CD14-positive monocyte (primary cell): ENCODE measurements at regions of chr1 and their contacts with region 1.

Region 1: GRCh38 chr1:183622884-183623785 is 12.4 kb downstream of the ARPC5 start:
- DNase-seq: peak; percentile 57 to 70 (median 57)
- H3K4me3 ChIP-seq: no peak overlapping the region
- H3K4me3 Mint-ChIP-seq: no peak overlapping the region
- H3K27ac ChIP-seq: peak overlapping the region in 1 of 2 donors; percentile 54
- H3K27ac Mint-ChIP-seq: peak overlapping the region; percentile 41 to 87 (median 66)
- H3K4me1 ChIP-seq: peaks cover 27 to 46% of the 10 kb centered on the region in 2 donors
- H3K4me1 Mint-ChIP-seq: peaks cover 39% of the 10 kb centered on the region
- H3K27me3 ChIP-seq: no peaks in the 10 kb centered on the region
- H3K27me3 Mint-ChIP-seq: peaks cover 0 to 1% (median 0%) of the 10 kb centered on the region in 3 donors
- CTCF ChIP-seq: peak; percentile 61

Region 2: GRCh38 chr1:183567584-183567983 is 55.6 kb before region 1 on chr1:
- intact Hi-C with region 1: loop called in 1 of 2 experiments (anchors 5 kb)
- DNase-seq: peak; percentile 70 to 85 (median 74)
- H3K4me3 ChIP-seq: peak overlapping the region in 1 of 3 experiments; percentile 10
- H3K4me3 Mint-ChIP-seq: peak overlapping the region; percentile 54
- H3K27ac ChIP-seq: peak overlapping the region; percentile 76 to 80
- H3K27ac Mint-ChIP-seq: peak overlapping the region; percentile 91 to 98 (median 98)
- H3K4me1 ChIP-seq: peaks cover 44 to 48% of the 10 kb centered on the region in 2 donors
- H3K4me1 Mint-ChIP-seq: peaks cover 44% of the 10 kb centered on the region
- H3K27me3 ChIP-seq: no peaks in the 10 kb centered on the region
- H3K27me3 Mint-ChIP-seq: no peaks in the 10 kb centered on the region
- CTCF ChIP-seq: no peak

Region 3: DNA sequence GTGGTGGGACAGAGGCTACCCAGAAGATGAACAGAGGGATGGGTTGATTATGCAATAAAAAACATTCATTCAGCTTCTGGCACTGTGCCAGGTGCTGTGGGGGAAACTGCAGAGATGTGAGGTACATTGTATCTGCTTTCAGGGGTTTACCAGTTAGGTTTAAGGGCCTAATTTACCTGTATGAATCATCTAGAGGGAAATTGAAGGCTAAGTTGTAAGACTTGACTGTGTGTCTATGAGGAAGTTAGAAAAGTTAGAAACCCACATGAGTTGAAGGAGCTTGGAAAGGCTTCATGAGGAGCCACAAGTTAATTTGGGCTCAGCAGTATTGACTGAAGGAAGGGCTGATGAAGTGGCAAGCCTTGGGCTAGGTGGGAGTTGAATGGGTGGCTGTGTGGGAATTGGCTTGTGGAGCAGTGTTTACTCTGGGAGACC is 66.7 kb after region 1 on chr1:
- intact Hi-C with region 1: no loop called
- DNase-seq: peak in 2 of 3 donors; percentile 1 to 8
- H3K4me3 ChIP-seq: no peak overlapping the region
- H3K4me3 Mint-ChIP-seq: no peak overlapping the region
- H3K27ac ChIP-seq: no peak overlapping the region
- H3K27ac Mint-ChIP-seq: no peak overlapping the region
- H3K4me1 ChIP-seq: no peaks in the 10 kb centered on the region
- H3K4me1 Mint-ChIP-seq: no peaks in the 10 kb centered on the region
- H3K27me3 ChIP-seq: no peaks in the 10 kb centered on the region
- H3K27me3 Mint-ChIP-seq: no peaks in the 10 kb centered on the region
- CTCF ChIP-seq: no peak